Body of pancreas (tissue), 4 donors: ENCODE measurements at regions of chr2 and their contacts with region 1.

Region 1: DNA sequence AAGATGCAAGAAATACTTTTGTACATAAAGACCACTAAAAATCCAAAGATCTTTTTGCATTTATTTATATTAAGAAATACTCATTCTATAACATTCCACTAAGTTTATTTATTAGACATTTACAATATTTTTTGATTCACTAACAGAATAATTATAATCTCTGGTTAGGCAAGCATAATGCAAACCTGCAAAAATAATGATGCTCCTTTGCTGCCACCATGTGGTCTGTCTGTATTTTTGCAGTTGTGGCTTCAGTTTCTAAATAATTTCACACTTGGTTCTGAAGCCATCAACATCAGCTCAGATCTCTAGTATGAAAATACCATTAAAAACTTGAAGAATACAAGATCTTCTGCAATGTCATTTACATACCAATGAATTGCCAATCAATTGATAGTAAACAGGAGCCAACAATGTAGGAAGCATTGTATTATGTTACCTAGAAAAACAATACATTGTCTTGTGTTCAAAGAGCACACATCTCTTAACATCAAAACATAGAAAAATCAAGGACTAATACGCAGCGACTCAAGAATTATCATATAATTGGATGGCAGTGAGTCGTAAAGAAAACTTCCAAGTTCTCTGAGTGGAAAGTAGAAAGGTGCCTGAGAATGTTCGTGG is 28.8 kb upstream of the WDR75 start:
- DNase-seq: peak; percentile 12 to 37 (median 28)
- ATAC-seq: peak; percentile 74
- H3K4me3 ChIP-seq: no peak overlapping the region
- H3K27ac ChIP-seq: no peak overlapping the region
- H3K4me1 ChIP-seq: peaks cover 6% of the 10 kb centered on the region
- H3K27me3 ChIP-seq: no peaks in the 10 kb centered on the region
- CTCF ChIP-seq: peak; percentile 17 to 81 (median 73)
- POLR2A ChIP-seq: no peak

Region 2: GRCh38 chr2:188529746-188530145 is 882.7 kb before region 1 on chr2:
- intact Hi-C with region 1: loop called (anchors 10 kb)
- DNase-seq: no peak
- ATAC-seq: no peak
- H3K4me3 ChIP-seq: no peak overlapping the region
- H3K27ac ChIP-seq: no peak overlapping the region
- H3K4me1 ChIP-seq: peaks cover 14% of the 10 kb centered on the region
- H3K27me3 ChIP-seq: no peaks in the 10 kb centered on the region
- CTCF ChIP-seq: no peak
- POLR2A ChIP-seq: no peak

Region 3: DNA sequence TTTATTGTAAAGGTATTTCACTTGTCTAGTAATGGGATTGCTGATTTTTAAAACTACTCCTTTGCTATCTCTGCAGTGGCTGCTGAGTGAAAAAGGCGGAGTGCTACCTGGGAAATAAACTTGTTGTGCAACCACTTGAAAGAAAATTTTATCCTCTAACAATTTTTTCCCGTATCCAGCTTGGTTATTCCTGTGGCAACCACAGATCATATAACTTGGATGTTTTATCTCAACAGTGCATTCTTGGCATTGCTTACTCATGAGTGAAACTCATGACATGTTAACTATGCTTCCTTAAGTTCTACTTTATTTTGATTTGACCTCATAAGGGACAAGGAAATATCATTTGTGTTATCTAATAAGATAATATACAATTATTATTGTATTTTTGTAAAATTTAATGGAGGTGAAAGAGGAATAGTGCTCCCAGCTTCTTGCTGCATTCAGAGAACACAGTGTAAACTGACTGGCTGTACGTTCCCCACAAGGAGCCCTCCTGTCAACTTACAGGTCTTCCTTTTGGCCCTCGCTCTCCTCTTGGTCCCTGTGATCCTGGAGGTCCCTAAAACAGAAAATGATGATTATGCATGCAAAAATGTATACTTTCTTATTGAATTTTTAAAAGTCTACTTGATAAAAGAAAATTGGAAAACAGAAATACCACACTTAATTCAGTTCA is 315.5 kb before region 1 on chr2:
- intact Hi-C with region 1: loop called (anchors 5 kb)
- DNase-seq: no peak
- ATAC-seq: no peak
- H3K4me3 ChIP-seq: no peak overlapping the region
- H3K27ac ChIP-seq: no peak overlapping the region
- H3K4me1 ChIP-seq: no peaks in the 10 kb centered on the region
- H3K27me3 ChIP-seq: no peaks in the 10 kb centered on the region
- CTCF ChIP-seq: no peak
- POLR2A ChIP-seq: no peak

Region 4: GRCh38 chr2:190050003-190050402 is 637.6 kb after region 1 on chr2:
- intact Hi-C with region 1: no loop called
- DNase-seq: no peak
- ATAC-seq: no peak
- H3K4me3 ChIP-seq: no peak overlapping the region
- H3K27ac ChIP-seq: no peak overlapping the region
- H3K4me1 ChIP-seq: no peaks in the 10 kb centered on the region
- H3K27me3 ChIP-seq: no peaks in the 10 kb centered on the region
- CTCF ChIP-seq: no peak
- POLR2A ChIP-seq: no peak